ENCODE measurements at regions of chr3 and their contacts with region 1.

Region 1: GRCh38 chr3:7546253-7546652 is 685.3 kb downstream of the GRM7 start:
- DNase-seq: no peak
- ATAC-seq: peak; percentile 29 to 45
- H3K4me3 ChIP-seq: no peak overlapping the region
- H3K27ac ChIP-seq: no peak overlapping the region
- H3K4me1 ChIP-seq: no peaks in the 10 kb centered on the region
- H3K27me3 ChIP-seq: no peaks in the 10 kb centered on the region

Region 2: DNA sequence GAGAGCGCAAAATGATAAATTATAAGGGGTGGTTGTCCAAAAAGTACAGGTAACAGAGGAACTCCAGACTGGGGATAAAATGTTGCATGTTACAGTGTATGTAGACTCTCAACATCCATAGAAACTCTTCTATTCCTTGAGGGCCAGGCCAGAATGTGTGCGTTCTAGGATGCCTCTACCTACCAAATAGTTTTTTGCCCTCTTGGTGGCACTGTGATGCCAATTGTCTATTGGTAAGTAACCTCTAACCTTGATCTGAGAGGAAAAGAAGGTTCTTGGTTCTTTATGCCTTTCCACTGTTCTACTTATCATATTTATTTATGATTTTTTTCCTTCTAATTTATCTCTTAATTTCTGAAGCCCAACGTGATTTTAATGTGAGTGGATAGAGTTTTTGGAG is 260.7 kb before region 1 on chr3:
- intact Hi-C with region 1: loop called in 1 of 4 experiments (anchors 10 kb)
- DNase-seq: no peak
- ATAC-seq: peak; percentile 52 to 64
- H3K4me3 ChIP-seq: no peak overlapping the region
- H3K27ac ChIP-seq: no peak overlapping the region
- H3K4me1 ChIP-seq: no peaks in the 10 kb centered on the region
- H3K27me3 ChIP-seq: no peaks in the 10 kb centered on the region

Region 3: GRCh38 chr3:7618606-7619005 is 72.4 kb after region 1 on chr3:
- intact Hi-C with region 1: no loop called
- DNase-seq: no peak
- ATAC-seq: no peak
- H3K4me3 ChIP-seq: no peak overlapping the region
- H3K27ac ChIP-seq: no peak overlapping the region
- H3K4me1 ChIP-seq: no peaks in the 10 kb centered on the region
- H3K27me3 ChIP-seq: no peaks in the 10 kb centered on the region

Measured in right cardiac atrium (tissue), 5 donors.